ENCODE measurements at regions of chr15 and their contacts with region 1.

Region 1: DNA sequence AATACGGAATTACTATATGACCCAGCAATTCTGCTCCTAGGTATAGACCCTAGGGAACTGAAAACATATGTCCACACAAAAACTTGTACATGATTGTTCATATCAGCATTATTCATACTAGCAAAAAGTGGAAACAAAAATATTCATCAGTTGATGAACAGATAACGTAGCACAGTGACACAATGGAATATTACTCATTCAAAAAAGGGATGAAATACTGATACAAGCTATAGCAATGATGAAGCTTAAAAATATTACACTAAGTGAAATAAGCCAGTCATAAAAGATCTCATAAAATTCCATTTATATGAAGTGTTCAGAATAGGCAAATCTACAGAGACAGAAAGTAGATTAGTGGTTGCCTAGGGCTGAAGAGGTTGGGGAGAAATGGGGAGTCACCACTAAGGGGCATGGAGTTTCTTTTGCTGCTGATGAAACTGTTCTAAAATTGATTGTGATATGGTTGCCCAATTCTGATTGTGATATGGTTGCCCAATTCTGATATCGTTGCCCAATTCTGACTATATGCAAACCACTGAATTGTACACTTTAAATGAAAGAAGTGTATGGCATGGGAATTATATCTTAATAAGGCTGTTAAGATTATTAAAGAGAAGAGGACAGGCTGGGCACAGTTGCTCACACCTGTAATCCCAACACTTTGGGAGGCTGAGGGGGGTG is 10.6 kb downstream of the C15orf61 start:
- DNase-seq: no peak
- ATAC-seq: peak; percentile 91
- H3K4me3 Mint-ChIP-seq: no peak overlapping the region
- H3K27ac Mint-ChIP-seq: no peak overlapping the region
- H3K4me1 Mint-ChIP-seq: peaks cover 16% of the 10 kb centered on the region
- H3K27me3 Mint-ChIP-seq: no peaks in the 10 kb centered on the region

Region 2: DNA sequence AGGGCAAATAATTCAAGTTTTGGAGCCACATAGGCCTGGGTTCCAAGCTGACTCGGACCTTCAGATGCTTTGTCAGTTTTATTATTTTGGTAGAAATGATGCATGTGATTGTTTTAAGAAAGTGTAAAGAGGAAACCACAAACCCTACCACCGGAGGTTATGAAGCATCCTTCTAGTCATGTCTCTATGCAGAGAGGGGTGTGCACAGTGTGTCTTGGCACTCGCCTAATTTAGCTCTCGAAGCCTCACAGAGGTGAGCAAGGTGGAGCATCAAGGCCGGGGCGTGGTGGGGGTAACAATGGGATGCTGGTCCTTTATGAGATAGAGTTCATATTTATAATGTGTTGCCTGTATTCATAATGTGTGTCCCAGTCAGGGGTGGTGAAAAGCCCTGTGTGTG is 893.1 kb before region 1 on chr15:
- CTCF ChIA-PET with region 1: no interaction called
- POLR2A ChIA-PET with region 1: no interaction called
- intact Hi-C with region 1: no loop called
- DNase-seq: peak; percentile 21
- ATAC-seq: peak; percentile 88
- H3K4me3 Mint-ChIP-seq: no peak overlapping the region
- H3K27ac Mint-ChIP-seq: no peak overlapping the region
- H3K4me1 Mint-ChIP-seq: peaks cover 8% of the 10 kb centered on the region
- H3K27me3 Mint-ChIP-seq: no peaks in the 10 kb centered on the region

Region 3: DNA sequence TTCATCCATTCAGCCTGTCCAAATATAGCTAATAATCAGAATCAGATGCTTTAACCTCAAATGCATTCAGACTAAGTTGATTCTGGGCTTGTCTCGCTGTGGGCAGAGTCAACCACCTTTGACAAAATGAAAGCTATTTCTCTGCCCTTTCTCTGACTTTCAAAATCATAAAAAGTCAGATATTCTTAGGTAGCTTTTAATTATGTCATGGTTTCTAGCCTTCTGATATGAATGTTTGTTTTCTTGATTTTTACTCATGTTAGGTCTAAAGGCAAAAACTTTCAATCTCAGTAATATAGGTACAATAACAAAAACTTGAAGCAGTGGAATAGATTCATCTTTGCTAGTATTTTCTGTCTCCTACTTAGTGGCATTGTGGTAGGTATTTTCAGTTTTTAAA is 35.9 kb before region 1 on chr15:
- CTCF ChIA-PET with region 1: no interaction called
- POLR2A ChIA-PET with region 1: no interaction called
- intact Hi-C with region 1: loop called in 1 of 2 experiments (anchors 1 kb)
- DNase-seq: no peak
- ATAC-seq: peak; percentile 65
- H3K4me3 Mint-ChIP-seq: no peak overlapping the region
- H3K27ac Mint-ChIP-seq: peak overlapping the region; percentile 28
- H3K4me1 Mint-ChIP-seq: peaks cover 9% of the 10 kb centered on the region
- H3K27me3 Mint-ChIP-seq: no peaks in the 10 kb centered on the region

Region 4: GRCh38 chr15:67559158-67559557 is 27.6 kb after region 1 on chr15:
- CTCF ChIA-PET with region 1: no interaction called
- POLR2A ChIA-PET with region 1: no interaction called
- intact Hi-C with region 1: no loop called
- DNase-seq: no peak
- ATAC-seq: no peak
- H3K4me3 Mint-ChIP-seq: no peak overlapping the region
- H3K27ac Mint-ChIP-seq: no peak overlapping the region
- H3K4me1 Mint-ChIP-seq: peaks cover 10% of the 10 kb centered on the region
- H3K27me3 Mint-ChIP-seq: no peaks in the 10 kb centered on the region

Measured in activated CD4-positive, alpha-beta T cell treated with anti-CD3 and anti-CD28 coated beads for 36 hours (primary cell).